ENCODE measurements at regions of chr10 and their contacts with region 1.

Region 1: GRCh38 chr10:6721480-6721879 is 141.4 kb upstream of the PRKCQ start:
- DNase-seq: no peak

Region 2: DNA sequence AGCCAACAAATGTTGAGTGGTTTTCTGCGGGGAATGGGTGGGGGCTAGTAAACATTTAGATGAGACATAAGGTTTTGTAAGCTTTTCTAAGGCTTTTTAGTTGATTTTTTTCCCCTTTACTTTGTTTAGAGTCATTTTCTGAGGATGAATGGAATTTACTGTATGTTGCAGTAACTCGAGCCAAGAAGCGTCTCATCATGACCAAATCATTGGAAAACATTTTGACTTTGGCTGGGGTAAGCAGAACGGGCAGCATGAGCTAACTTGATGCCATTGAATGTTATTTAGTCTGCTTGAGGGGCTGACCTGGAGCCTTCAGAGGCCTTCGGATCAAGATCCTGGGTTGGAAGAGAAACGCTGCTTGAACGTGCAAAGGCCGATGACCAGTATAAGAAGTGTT is 794.2 kb before region 1 on chr10:
- intact Hi-C with region 1: loop called (anchors 10 kb)
- DNase-seq: peak in 1 of 10 donors; percentile 10

Region 3: DNA sequence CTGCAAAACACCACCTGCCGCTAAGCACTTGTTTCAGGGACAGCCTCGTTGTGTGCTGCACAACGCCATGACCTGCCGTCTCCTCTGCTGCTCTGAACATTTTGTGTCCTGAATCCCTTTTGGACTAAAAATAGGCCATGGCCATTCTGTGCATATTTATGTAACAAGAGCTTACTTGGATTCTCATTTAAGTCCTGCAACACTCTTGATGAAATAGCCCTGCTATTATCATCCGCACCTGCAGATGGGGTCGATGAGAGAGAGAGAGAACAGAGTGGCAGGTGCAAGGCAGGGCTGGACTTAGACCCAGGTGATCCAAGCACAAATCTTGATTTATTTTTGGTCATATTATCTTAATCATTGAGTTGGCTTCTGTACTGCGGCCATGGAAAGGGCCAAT is 20.2 kb before region 1 on chr10:
- intact Hi-C with region 1: no loop called
- DNase-seq: no peak